Right ventricle myocardium inferior (tissue), 1 donor: ENCODE measurements at regions of chr12 and their contacts with region 1.

Region 1: GRCh38 chr12:124518051-124518932 is 49.1 kb downstream of the NCOR2 start:
- DNase-seq: peak; percentile 97
- ATAC-seq: peak; percentile 76

Region 2: GRCh38 chr12:124369055-124369900 is 149.0 kb before region 1 on chr12:
- intact Hi-C with region 1: loop called (anchors 5 kb)
- DNase-seq: peak; percentile 94
- ATAC-seq: peak; percentile 85

Region 3: GRCh38 chr12:124388679-124389536 is 129.4 kb before region 1 on chr12:
- intact Hi-C with region 1: loop called (anchors 5 kb)
- DNase-seq: peak; percentile 93
- ATAC-seq: peak; percentile 59

Region 4: DNA sequence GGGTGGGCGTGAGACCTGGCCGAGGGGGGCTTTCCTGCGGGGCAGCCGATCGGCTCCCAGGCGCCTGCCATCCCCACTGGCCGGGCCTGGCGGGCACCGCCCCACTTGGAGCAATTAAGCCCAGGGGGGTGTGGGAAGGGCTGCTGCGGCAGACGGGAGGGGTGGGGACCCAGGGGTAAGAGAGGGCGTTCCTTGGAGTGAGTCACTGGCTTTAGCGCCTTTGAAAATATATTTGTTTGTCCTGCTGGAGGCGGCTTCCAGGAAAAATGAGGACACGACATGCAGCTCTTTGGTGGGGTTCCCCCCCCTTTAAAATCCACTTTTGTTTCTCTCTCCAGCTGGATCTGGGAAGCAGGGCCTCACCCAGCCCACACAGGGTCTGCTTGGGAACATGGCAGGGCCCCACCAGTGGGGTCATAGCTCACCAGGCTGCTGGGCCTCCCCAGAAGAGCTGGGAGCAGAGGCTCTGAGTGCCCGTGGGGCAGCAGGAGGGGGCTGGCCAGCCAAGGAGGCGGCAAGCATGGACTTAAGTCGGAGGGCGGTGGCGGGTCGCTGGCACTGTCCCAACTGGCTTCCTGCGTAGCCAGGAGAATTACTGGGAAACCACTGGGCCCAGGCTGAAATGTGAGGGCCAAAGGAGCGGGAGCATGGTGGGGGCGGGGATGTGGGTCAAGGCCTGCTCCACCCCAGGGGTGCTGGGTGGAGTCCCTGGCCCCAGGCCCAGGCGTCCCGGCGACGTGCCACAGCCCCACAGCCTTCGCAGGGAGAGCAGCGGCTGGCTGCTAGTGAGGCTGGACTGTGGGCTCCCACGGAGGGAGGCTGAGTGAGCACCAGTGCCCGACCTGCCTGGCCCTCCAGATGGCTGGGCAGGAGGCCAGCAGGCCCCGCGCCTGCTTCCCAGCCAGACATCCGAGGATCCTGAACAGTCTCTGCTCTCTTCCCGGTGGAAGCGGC is 95.4 kb before region 1 on chr12:
- intact Hi-C with region 1: loop called (anchors 2 kb)
- DNase-seq: peak; percentile 94
- ATAC-seq: peak; percentile 84

Region 5: DNA sequence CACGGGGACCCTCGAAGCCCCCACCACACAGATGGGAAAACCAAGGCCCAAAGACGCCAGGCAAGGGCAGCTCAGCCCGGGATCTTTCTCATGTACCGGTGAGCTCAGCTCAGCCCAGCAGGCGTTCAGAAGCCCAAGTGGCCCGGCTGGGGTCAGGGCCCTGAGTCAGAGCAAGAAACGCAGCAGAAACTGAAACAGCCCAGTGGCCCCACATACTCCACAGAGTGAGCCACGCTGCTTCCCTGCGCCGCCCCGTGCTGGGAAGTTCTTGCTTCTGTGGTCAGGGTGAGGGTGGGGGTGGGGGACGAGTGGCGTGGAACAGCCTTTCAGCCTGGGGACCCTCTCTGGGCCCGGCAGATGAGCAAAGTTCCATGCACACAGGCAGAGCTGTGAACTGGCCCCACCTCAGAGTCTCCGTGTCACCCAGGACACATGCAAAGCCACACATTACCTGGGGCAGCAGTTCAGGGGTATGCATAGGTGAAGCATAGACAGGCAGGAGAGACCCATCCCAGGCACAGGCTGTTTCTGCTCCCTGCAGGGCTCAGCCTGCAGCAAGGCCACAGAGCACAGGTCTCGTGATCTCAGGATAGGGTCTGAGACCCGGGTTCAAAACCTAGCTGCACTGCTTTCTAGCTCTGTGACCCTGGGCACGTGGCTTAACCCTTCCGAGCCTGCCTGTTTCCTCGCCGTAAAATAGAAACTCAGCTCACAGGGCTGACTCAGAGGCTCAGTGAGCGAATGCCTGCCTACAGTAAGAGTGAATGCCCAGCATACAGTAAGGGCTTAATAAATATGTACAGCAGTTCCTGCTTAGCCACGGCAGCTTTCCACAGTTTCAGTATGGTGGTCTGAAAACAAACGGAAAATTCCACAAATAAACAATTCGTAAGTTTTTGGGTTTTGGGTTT is 27.5 kb after region 1 on chr12:
- intact Hi-C with region 1: no loop called
- DNase-seq: no peak
- ATAC-seq: no peak

Region 6: DNA sequence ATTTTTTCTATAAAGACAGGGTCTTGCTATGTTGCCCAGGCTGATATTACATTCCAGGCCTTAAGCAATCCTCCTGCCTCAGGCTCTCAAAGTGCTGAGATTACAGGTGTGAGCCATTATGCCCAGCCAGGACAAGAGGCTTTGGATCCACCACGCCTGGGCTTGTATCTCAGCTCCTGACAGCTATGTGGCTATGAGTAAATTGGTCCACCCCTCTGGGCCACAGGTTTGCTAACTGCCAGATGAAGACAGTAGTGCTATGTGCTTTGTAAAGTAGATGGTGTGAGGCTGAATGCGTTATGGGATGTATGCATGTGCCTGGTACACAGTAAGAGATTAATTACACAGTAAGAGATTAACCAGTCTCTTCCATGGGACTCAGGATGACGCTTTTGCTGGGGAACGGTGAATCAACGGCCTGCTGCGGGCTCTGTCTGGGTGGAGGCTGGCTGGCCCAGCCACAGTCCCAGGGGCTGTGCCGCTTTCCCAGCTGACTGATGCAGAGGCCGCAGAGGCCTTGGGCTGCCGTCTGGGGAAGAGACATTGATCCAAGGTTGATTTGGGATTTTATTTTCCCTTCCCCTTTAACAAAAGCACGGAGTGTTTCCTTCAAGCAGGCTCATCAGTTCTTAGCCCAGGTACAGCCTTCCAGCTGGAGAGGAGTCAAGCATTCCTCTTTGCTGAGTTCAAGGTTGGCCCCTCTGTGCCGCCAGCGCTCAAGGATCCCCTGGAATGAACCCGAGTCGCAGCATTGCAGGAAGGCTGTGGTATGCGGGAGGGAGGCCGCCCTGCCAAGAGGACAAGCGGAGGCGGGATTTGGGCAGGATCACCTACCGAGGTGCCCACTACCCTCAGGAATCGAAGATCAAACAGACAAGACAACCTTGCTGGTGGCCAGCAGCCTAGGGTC is 102.7 kb after region 1 on chr12:
- intact Hi-C with region 1: loop called (anchors 5 kb)
- DNase-seq: peak; percentile 84
- ATAC-seq: peak; percentile 79

Region 7: GRCh38 chr12:124745891-124746570 is 227.7 kb after region 1 on chr12:
- intact Hi-C with region 1: loop called (anchors 5 kb)
- DNase-seq: peak; percentile 96
- ATAC-seq: peak; percentile 96